ENCODE measurements at regions of chr11 and their contacts with region 1.

Region 1: DNA sequence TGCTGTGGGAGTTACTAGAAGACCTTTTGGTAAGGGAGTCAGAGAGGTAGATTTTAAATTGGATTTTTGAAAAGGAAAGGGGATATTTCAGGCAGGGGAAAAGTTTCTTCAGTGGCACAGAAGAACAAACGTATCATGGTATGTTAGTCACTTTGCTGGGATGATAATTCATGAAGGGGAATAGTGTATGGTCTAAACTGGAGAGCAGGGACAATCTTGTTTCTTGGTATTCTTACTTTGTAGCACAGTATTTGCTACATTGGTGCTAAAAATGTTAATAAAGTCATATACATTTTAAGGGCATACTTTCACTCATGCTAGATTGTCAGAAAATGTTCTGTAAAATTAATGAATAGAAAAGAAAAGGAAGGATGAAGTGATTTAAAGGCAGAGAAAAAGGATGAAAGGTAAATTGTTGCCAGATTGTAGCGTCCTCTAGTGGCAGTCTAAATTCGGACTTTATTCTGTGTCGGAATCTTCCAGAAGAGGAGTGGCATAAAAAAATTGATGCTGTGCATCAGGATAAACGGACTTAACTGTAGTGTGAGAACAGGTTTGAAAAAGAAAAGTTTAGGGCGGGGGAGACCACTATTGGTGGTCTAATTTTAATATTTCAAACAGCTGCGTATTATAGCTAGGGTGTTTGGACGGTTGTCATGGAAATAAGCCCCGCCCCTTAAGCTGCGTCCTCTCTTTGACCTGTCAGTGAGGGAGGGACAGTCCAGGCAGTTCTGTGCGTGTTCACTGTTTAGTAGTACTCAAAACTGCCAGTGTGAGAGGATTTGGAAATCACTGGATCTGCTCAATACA is at the start of gene BCO2:
- DNase-seq: peak; percentile 41
- H3K4me3 Mint-ChIP-seq: peak within 1 kb of the TSS; percentile 52
- H3K27ac Mint-ChIP-seq: no peak within 1 kb of the TSS
- H3K4me1 Mint-ChIP-seq: peaks cover 10% of the 10 kb centered on the region
- H3K27me3 Mint-ChIP-seq: peaks cover 26% of the 10 kb centered on the region
- total RNA-seq, gene BCO2: 1.0 to 1.4 TPM

Region 2: GRCh38 chr11:112113539-112114457 is 61.2 kb before region 1 on chr11:
- CTCF ChIA-PET with region 1: interaction called, 12 read pairs
- POLR2A ChIA-PET with region 1: no interaction called
- DNase-seq: no peak
- H3K4me3 Mint-ChIP-seq: no peak overlapping the region
- H3K27ac Mint-ChIP-seq: no peak overlapping the region
- H3K4me1 Mint-ChIP-seq: peaks cover 19% of the 10 kb centered on the region
- H3K27me3 Mint-ChIP-seq: no peaks in the 10 kb centered on the region

Measured in activated CD4-positive, alpha-beta memory T cell treated with anti-CD3 and anti-CD28 coated beads, Interleukin-2, amount 10 ng/mL, durations not matched to agents 7 days and 5 days (primary cell).